ENCODE measurements at regions of chr21 and their contacts with region 1.

Region 1: DNA sequence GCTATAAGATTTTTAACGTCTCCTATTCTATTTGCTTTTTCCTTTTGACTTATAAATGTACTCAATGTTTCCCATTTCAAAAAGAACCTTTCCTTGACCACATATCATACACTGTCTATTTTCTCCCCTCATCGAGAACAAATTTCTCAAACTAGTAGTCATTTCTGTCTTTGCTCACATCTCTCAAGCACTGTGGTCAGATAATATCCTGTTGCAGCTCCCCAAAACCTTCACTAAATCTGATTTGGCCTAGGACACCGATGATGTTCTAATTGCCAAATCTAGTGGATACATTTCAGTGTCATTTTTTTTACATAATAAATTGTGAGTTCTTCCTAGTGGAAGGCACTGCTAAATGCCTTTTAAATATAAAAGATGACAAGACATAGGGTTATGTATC is 19.4 kb downstream of the CXADR start:
- DNase-seq: no peak
- H3K4me3 ChIP-seq: no peak overlapping the region
- H3K27ac ChIP-seq: no peak overlapping the region
- H3K4me1 ChIP-seq: no peaks in the 10 kb centered on the region
- CTCF ChIP-seq: no peak

Region 2: GRCh38 chr21:17519208-17519738 is 13.0 kb before region 1 on chr21:
- CTCF ChIA-PET with region 1: no interaction called
- POLR2A ChIA-PET with region 1: interaction called, 10 read pairs
- intact Hi-C with region 1: no loop called
- DNase-seq: no peak
- H3K4me3 ChIP-seq: no peak overlapping the region
- H3K27ac ChIP-seq: no peak overlapping the region
- H3K4me1 ChIP-seq: peaks cover 5% of the 10 kb centered on the region
- CTCF ChIP-seq: no peak

Region 3: GRCh38 chr21:17775431-17776126 is 243.3 kb after region 1 on chr21:
- CTCF ChIA-PET with region 1: no interaction called
- POLR2A ChIA-PET with region 1: no interaction called
- intact Hi-C with region 1: no loop called
- DNase-seq: peak; percentile 28
- H3K4me3 ChIP-seq: no peak overlapping the region
- H3K27ac ChIP-seq: no peak overlapping the region
- H3K4me1 ChIP-seq: peaks cover 13% of the 10 kb centered on the region
- CTCF ChIP-seq: no peak

Region 4: DNA sequence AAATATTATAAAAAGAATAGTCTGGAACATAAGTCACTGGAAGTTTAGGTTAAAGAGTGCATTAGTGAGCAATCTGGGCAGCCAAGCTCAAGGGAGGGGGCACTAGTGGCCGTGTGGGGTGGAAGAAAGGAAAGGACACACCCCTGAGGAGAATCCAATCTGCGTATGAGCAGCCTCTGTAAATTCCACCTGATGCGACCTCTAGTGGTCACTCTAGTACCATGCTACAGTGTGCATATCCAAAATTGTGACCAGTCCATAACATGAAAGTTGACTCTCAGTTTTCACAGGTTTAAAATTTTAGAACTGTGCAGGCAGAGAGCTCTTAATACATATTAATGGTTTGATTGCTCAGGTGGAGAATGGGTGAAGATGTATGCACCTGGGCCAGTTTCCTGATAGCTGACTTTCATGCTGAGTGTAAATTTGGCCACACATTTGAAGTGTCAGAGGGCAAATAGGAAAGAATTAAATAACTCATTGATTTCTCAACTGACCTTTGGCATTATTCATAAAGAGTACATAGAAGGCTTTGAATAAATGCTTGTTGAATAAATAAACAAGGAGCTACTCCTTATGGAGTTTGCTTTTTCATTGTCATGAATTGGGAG is 392.8 kb after region 1 on chr21:
- CTCF ChIA-PET with region 1: no interaction called
- POLR2A ChIA-PET with region 1: no interaction called
- intact Hi-C with region 1: no loop called
- DNase-seq: peak; percentile 76
- H3K4me3 ChIP-seq: no peak overlapping the region
- H3K27ac ChIP-seq: no peak overlapping the region
- H3K4me1 ChIP-seq: no peaks in the 10 kb centered on the region
- CTCF ChIP-seq: peak; percentile 94

Measured in OCI-LY7 (cell line).